ENCODE measurements at regions of chr17 and their contacts with region 1.

Region 1: GRCh38 chr17:35808962-35809854 is at the start of gene TAF15:
- DNase-seq: peak; percentile 95
- H3K4me3 Mint-ChIP-seq: peak within 1 kb of the TSS; percentile 98
- H3K27ac Mint-ChIP-seq: peak within 1 kb of the TSS; percentile 99
- H3K4me1 Mint-ChIP-seq: peaks cover 67% of the 10 kb centered on the region
- H3K27me3 Mint-ChIP-seq: no peaks in the 10 kb centered on the region
- total RNA-seq, gene TAF15: 311 and 322 TPM in 2 replicates

Region 2: GRCh38 chr17:35612924-35613521 is 196.2 kb before region 1 on chr17:
- intact Hi-C with region 1: loop called (anchors 1 kb)
- DNase-seq: peak; percentile 7
- H3K4me3 Mint-ChIP-seq: no peak overlapping the region
- H3K27ac Mint-ChIP-seq: no peak overlapping the region
- H3K4me1 Mint-ChIP-seq: peaks cover 7% of the 10 kb centered on the region
- H3K27me3 Mint-ChIP-seq: no peaks in the 10 kb centered on the region

Region 3: DNA sequence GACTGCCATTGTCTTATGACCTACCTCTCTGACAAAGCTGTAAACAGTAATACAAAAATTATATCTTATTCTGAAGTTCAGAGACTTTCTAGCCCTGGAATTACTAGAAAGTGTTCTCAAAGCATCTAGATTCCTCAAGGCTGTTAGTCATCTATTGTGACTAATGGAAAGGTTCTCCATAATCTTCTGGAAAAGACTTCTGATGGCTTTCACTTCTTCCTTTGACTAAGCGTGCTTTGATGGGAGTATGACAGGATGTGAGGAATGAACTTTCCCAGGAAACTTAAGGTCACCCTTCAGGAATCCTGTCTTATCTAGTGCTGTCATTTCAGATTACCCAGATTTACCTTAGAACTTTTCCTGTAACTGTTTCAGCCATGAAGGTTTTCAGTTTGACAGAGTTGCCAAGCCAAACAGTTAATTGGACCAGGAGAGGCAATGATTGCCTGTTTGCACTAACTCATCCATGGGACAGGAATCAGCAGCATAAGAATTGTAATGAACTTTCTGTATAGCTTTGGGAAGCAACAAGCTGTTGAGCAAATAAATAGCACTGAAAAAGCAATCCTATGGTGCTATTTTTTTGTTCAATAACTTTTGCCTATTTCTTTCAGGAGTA is 178.6 kb before region 1 on chr17:
- intact Hi-C with region 1: no loop called
- DNase-seq: no peak
- H3K4me3 Mint-ChIP-seq: no peak overlapping the region
- H3K27ac Mint-ChIP-seq: no peak overlapping the region
- H3K4me1 Mint-ChIP-seq: peaks cover 5% of the 10 kb centered on the region
- H3K27me3 Mint-ChIP-seq: no peaks in the 10 kb centered on the region

Region 4: DNA sequence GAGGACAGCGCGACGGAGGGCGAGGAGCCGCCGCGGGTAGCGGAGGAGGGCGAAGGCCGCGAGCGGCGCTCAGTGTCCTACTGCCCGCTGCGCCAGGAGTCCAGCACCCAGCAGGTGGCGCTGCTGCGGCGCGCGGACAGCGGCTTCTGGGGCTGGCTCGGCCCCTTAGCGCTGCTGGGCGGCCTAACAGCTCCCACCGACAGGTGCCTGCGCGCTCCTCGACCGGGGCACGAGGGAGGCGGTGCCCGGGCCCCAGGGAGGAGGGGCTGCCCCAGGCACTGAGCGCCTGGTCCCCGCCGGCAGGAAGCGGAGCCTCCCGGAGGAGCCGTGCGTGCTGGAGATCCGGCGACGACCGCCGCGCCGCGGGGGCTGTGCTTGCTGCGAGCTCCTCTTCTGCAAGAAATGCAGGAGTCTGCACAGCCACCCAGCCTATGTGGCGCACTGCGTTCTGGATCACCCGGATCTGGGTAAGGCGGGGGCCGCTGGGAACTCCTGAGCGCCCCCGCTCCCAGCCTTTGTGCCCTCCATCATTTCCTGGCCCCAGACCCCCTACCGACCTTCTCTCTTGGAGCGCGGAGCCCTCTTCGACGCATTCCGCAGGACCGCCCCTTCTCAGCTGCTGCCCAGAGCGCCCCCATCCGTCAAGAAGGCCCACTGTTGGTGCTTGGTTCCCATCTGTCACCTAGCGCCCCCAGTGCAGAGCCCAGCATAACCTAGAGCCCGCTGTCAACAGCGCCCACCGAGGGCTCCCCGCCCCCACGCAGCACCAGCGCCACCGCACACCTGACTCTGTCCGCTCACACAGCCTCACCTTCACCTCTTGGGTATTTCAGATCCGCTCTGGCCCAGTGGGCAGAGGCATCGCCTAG is 44.9 kb before region 1 on chr17:
- intact Hi-C with region 1: loop called (anchors 1 kb)
- DNase-seq: peak; percentile 82
- H3K4me3 Mint-ChIP-seq: peak overlapping the region; percentile 88
- H3K27ac Mint-ChIP-seq: peak overlapping the region; percentile 79
- H3K4me1 Mint-ChIP-seq: peaks cover 7% of the 10 kb centered on the region
- H3K27me3 Mint-ChIP-seq: peaks cover 22% of the 10 kb centered on the region

Measured in activated T-helper 1 cell treated with anti-CD3 and anti-CD28 coated beads, Interleukin-12 subunit alpha, Interleukin-12 subunit beta, Interleukin-2, Interleukin-4 antibody, amounts not matched to agents 30 ng/mL and 10 ng/mL and 1 ng/mL, durations not matched to agents 14 hours and 24 hours and 36 hours (primary cell).